ENCODE measurements at regions of chr12 and their contacts with region 1.

Region 1: GRCh38 chr12:53379389-53380103 is 430 bp upstream of the SP1 start:
- DNase-seq: peak in 8 of 9 donors; percentile 54 to 100 (median 99)
- ATAC-seq: peak; percentile 85
- H3K4me3 ChIP-seq: peak overlapping the region; percentile 61
- H3K4me3 Mint-ChIP-seq: no peak overlapping the region
- H3K27ac ChIP-seq: peak overlapping the region; percentile 91
- H3K27ac Mint-ChIP-seq: no peak overlapping the region
- H3K4me1 ChIP-seq: peaks cover 37 to 40% of the 10 kb centered on the region in 2 donors
- H3K4me1 Mint-ChIP-seq: peaks cover 31 to 44% (median 37%) of the 10 kb centered on the region in 7 donors
- H3K27me3 ChIP-seq: no peaks in the 10 kb centered on the region
- H3K27me3 Mint-ChIP-seq: no peaks in the 10 kb centered on the region

Region 2: DNA sequence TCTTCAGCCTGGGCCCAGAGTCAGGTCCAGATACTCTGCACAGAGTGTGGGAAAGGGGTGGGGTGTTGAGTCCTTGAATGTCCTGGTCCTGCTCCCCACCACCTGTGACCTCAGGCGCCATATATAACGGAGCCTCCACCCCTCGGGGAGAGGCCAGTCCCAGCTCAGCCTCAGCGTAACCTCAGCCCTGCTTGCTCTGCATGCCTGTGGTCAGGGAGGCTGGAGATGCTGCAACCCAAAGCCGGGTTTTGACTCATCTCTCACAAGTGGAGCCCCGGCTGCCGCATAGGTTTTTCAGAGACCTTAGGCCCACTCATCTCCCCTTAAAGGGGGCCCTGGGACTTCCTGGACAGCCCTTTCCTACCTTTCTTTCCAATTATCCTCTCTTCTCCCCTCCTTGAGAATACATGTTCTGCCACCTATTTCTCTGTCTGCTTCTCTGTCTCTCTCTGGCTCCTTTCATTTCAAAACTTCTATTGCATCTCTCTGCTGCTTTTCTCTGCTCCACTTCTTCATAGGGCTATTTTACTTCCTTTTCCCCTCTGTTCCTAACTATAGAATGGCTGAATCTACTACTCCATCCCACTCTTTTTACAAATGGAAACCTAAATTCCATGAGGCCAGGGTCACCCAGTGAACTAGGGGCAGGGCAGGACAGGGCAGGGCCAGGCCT is 173.7 kb before region 1 on chr12:
- CTCF ChIA-PET with region 1: no interaction called
- POLR2A ChIA-PET with region 1: no interaction called
- intact Hi-C with region 1: no loop called
- DNase-seq: peak in 1 of 9 donors; percentile 75
- ATAC-seq: peak; percentile 68
- H3K4me3 ChIP-seq: peak overlapping the region; percentile 84
- H3K4me3 Mint-ChIP-seq: peak overlapping the region; percentile 83 to 92 (median 86)
- H3K27ac ChIP-seq: peak overlapping the region; percentile 85
- H3K27ac Mint-ChIP-seq: peak overlapping the region; percentile 61 to 90 (median 87)
- H3K4me1 ChIP-seq: peaks cover 63 to 73% of the 10 kb centered on the region in 2 donors
- H3K4me1 Mint-ChIP-seq: peaks cover 53 to 84% (median 71%) of the 10 kb centered on the region in 7 donors
- H3K27me3 ChIP-seq: no peaks in the 10 kb centered on the region
- H3K27me3 Mint-ChIP-seq: no peaks in the 10 kb centered on the region

Region 3: DNA sequence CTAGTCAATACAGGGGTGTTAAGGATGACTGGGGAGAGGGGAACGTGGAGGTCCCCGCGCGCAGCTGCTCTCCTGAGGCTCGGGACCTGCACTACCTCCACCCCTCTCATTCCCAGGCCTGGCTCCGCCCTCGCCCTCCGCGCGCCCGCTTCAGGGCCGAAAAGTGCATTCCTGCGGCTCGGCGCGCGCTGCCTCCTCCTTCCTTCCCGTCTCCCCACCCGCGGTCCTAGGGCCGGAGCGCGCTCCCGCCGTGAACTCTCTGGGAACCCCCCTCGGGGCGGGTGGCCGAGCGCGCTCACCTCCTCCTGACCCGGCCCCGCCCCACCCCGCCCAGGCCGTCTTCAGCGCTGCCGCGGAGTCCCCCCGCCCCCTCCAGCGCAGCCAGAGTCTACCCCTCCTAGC is 158.7 kb before region 1 on chr12:
- CTCF ChIA-PET with region 1: no interaction called
- POLR2A ChIA-PET with region 1: interaction called, 7 read pairs
- intact Hi-C with region 1: loop called (anchors 1 to 2 kb)
- DNase-seq: peak in 8 of 9 donors; percentile 51 to 85 (median 55)
- ATAC-seq: peak; percentile 79
- H3K4me3 ChIP-seq: peak overlapping the region; percentile 95
- H3K4me3 Mint-ChIP-seq: peak overlapping the region; percentile 94 to 100 (median 98)
- H3K27ac ChIP-seq: peak overlapping the region; percentile 78
- H3K27ac Mint-ChIP-seq: peak overlapping the region; percentile 84 to 98 (median 94)
- H3K4me1 ChIP-seq: peaks cover 55 to 63% of the 10 kb centered on the region in 2 donors
- H3K4me1 Mint-ChIP-seq: peaks cover 50 to 80% (median 77%) of the 10 kb centered on the region in 7 donors
- H3K27me3 ChIP-seq: no peaks in the 10 kb centered on the region
- H3K27me3 Mint-ChIP-seq: no peaks in the 10 kb centered on the region

Region 4: DNA sequence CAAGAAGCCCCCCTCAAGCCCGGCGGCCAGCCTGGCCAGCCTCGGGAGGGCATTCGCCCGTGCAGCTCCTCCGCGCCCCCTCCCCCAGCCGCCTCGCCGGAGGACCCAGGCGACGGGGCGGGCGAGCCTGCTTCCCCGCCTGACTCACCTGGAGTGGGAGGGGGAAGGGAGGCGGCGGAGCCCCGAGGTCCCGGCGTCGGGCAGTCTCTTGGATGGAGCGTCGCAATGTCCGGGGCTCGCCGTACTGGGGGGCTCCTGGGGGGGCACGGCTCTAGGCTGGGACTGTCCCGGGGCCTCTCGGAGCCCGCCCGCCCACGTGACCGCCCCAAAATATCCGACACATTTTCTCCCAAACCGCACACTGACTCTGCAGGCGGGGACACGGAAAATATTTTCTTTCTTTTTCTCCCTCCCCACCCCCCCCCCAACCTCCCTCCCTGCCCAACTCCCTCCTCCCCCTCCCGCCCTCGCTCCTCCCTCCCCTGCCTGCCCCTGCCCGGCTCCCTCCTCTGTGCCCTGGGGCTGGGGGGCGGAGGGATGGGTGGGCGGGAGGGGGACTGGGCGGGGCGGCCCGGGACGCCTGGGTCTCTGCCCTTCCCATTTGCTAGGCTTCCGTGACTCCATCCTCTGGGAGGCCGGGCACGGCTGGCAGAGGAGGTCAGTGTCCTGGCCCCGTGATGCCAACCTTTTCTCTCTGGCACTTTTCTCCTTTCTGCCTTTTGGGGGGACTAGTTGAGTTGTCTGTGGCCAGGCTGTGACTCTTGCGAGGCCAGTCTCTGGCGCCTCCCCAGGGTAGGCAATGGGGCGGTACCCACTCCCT is 147.5 kb before region 1 on chr12 and contains the start of gene RARG:
- CTCF ChIA-PET with region 1: no interaction called
- POLR2A ChIA-PET with region 1: no interaction called
- intact Hi-C with region 1: no loop called
- DNase-seq: peak in 3 of 9 donors; percentile 33 to 78 (median 58)
- ATAC-seq: peak; percentile 74
- H3K4me3 ChIP-seq: peak within 1 kb of the TSS; percentile 52
- H3K4me3 Mint-ChIP-seq: peak within 1 kb of the TSS; percentile 83 to 95 (median 88)
- H3K27ac ChIP-seq: peak within 1 kb of the TSS; percentile 56
- H3K27ac Mint-ChIP-seq: peak within 1 kb of the TSS; percentile 77 to 90 (median 86)
- H3K4me1 ChIP-seq: peaks cover 40% of the 10 kb centered on the region in 2 donors
- H3K4me1 Mint-ChIP-seq: peaks cover 38 to 76% (median 67%) of the 10 kb centered on the region in 7 donors
- H3K27me3 ChIP-seq: no peaks in the 10 kb centered on the region
- H3K27me3 Mint-ChIP-seq: no peaks in the 10 kb centered on the region
- total RNA-seq, gene RARG: 22.4 to 73.1 (median 57.4) TPM

Region 5: DNA sequence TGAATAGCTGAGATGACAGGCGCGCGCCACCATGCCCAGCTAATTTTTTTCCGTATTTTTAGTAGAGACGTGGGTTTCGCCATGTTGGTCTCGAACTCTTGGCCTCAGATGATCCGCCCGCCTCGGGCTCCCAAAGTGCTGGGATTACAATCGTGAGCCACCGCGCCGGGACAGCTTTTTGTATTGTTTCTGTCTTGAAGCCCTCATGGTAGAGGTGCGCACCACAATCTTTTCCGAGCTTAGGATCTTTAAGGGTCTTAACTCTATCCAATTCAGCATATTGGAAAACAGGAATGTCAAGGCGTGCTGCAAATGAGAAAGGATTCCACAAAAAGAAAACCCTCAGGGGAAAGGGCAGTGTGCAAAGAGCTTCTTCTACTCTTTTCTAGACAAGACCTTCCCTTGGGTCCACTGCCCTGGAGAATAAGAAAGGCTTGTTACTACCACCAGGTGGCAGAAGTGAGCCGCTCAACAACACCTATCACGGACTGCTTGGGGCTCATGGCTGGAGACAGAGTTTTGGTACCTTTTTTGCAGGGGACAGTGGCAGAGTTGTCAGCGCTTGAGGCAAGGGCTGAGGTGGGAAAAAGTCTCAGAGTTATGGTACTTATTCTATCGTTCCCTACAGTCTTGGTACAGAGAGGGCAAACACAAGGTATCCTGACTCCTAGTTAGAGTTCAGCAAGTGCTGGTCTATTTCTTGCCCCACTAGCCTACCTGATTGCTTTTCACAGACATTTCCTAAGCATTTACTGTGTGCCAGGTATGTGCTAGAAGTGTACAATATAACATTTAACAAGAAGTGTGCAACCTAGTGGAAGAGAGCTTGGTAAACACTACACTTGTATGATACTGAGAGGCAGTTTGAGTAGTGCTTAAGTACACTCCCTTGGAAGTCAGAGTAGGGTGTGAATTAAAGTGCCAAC is 27.0 kb before region 1 on chr12:
- CTCF ChIA-PET with region 1: interaction called, 31 read pairs
- POLR2A ChIA-PET with region 1: interaction called, 7 read pairs
- intact Hi-C with region 1: loop called (anchors 1 kb)
- DNase-seq: peak; percentile 58 to 87 (median 82)
- ATAC-seq: peak; percentile 99
- H3K4me3 ChIP-seq: no peak overlapping the region
- H3K4me3 Mint-ChIP-seq: peak overlapping the region in 2 of 10 donors; percentile 14 to 32
- H3K27ac ChIP-seq: no peak overlapping the region
- H3K27ac Mint-ChIP-seq: peak overlapping the region in 6 of 9 donors; percentile 4 to 52 (median 12)
- H3K4me1 ChIP-seq: peaks cover 0 to 3% of the 10 kb centered on the region in 2 donors
- H3K4me1 Mint-ChIP-seq: peaks cover 5 to 13% (median 6%) of the 10 kb centered on the region in 7 donors
- H3K27me3 ChIP-seq: no peaks in the 10 kb centered on the region
- H3K27me3 Mint-ChIP-seq: no peaks in the 10 kb centered on the region

Region 6: GRCh38 chr12:53424626-53425514 is 45.3 kb after region 1 on chr12:
- CTCF ChIA-PET with region 1: interaction called, 15 read pairs
- POLR2A ChIA-PET with region 1: interaction called, 6 read pairs
- intact Hi-C with region 1: loop called (anchors 1 kb)
- DNase-seq: no peak
- ATAC-seq: no peak
- H3K4me3 ChIP-seq: no peak overlapping the region
- H3K4me3 Mint-ChIP-seq: no peak overlapping the region
- H3K27ac ChIP-seq: no peak overlapping the region
- H3K27ac Mint-ChIP-seq: no peak overlapping the region
- H3K4me1 ChIP-seq: peaks cover 3 to 4% of the 10 kb centered on the region in 2 donors
- H3K4me1 Mint-ChIP-seq: peaks cover 4 to 15% (median 6%) of the 10 kb centered on the region in 7 donors
- H3K27me3 ChIP-seq: no peaks in the 10 kb centered on the region
- H3K27me3 Mint-ChIP-seq: no peaks in the 10 kb centered on the region

Region 7: GRCh38 chr12:53492830-53493611 is 113.5 kb after region 1 on chr12:
- CTCF ChIA-PET with region 1: no interaction called
- POLR2A ChIA-PET with region 1: interaction called, 10 read pairs
- intact Hi-C with region 1: loop called (anchors 2 kb)
- DNase-seq: peak; percentile 72 to 90 (median 80)
- ATAC-seq: peak; percentile 98
- H3K4me3 ChIP-seq: peak overlapping the region; percentile 82
- H3K4me3 Mint-ChIP-seq: peak overlapping the region; percentile 89 to 98 (median 92)
- H3K27ac ChIP-seq: peak overlapping the region; percentile 87
- H3K27ac Mint-ChIP-seq: peak overlapping the region; percentile 88 to 98 (median 95)
- H3K4me1 ChIP-seq: peaks cover 12 to 16% of the 10 kb centered on the region in 2 donors
- H3K4me1 Mint-ChIP-seq: peaks cover 19 to 51% (median 40%) of the 10 kb centered on the region in 7 donors
- H3K27me3 ChIP-seq: no peaks in the 10 kb centered on the region
- H3K27me3 Mint-ChIP-seq: no peaks in the 10 kb centered on the region

Region 8: GRCh38 chr12:53625946-53626701 is 246.6 kb after region 1 on chr12 and contains the start of gene ATF7:
- CTCF ChIA-PET with region 1: no interaction called
- POLR2A ChIA-PET with region 1: no interaction called
- intact Hi-C with region 1: loop called (anchors 1 kb)
- DNase-seq: peak; percentile 95 to 100 (median 99)
- ATAC-seq: peak; percentile 97
- H3K4me3 ChIP-seq: peak within 1 kb of the TSS; percentile 92
- H3K4me3 Mint-ChIP-seq: peak within 1 kb of the TSS; percentile 97 to 100 (median 98)
- H3K27ac ChIP-seq: peak within 1 kb of the TSS; percentile 83
- H3K27ac Mint-ChIP-seq: peak within 1 kb of the TSS; percentile 95 to 99 (median 97)
- H3K4me1 ChIP-seq: peaks cover 20 to 32% of the 10 kb centered on the region in 2 donors
- H3K4me1 Mint-ChIP-seq: peaks cover 30 to 55% (median 49%) of the 10 kb centered on the region in 7 donors
- H3K27me3 ChIP-seq: no peaks in the 10 kb centered on the region
- H3K27me3 Mint-ChIP-seq: peaks cover 0 to 6% (median 0%) of the 10 kb centered on the region in 5 donors
- total RNA-seq, gene ATF7: 21.9 to 39.5 (median 30.9) TPM

Measured in naive thymus-derived CD4-positive, alpha-beta T cell (primary cell).